ENCODE measurements at regions of chr4 and their contacts with region 1.

Region 1: GRCh38 chr4:168082379-168082778 is 10.0 kb upstream of the ANXA10 start:
- DNase-seq: no peak
- H3K4me3 ChIP-seq: no peak overlapping the region
- H3K27ac ChIP-seq: no peak overlapping the region
- H3K4me1 ChIP-seq: peaks cover 5% of the 10 kb centered on the region
- H3K27me3 ChIP-seq: no peaks in the 10 kb centered on the region
- CTCF ChIP-seq: no peak
- POLR2A ChIP-seq: no peak

Region 2: GRCh38 chr4:167595898-167596297 is 486.5 kb before region 1 on chr4:
- CTCF ChIA-PET with region 1: no interaction called
- POLR2A ChIA-PET with region 1: interaction called, 11 read pairs
- dilution Hi-C with region 1: no loop called
- intact Hi-C with region 1: no loop called
- DNase-seq: no peak
- H3K4me3 ChIP-seq: no peak overlapping the region
- H3K27ac ChIP-seq: no peak overlapping the region
- H3K4me1 ChIP-seq: no peaks in the 10 kb centered on the region
- H3K27me3 ChIP-seq: no peaks in the 10 kb centered on the region
- CTCF ChIP-seq: no peak
- POLR2A ChIP-seq: no peak

Measured in endothelial cell of umbilical vein (primary cell).